H1 (cell line): ENCODE measurements at regions of chr9 and their contacts with region 1.

Region 1: DNA sequence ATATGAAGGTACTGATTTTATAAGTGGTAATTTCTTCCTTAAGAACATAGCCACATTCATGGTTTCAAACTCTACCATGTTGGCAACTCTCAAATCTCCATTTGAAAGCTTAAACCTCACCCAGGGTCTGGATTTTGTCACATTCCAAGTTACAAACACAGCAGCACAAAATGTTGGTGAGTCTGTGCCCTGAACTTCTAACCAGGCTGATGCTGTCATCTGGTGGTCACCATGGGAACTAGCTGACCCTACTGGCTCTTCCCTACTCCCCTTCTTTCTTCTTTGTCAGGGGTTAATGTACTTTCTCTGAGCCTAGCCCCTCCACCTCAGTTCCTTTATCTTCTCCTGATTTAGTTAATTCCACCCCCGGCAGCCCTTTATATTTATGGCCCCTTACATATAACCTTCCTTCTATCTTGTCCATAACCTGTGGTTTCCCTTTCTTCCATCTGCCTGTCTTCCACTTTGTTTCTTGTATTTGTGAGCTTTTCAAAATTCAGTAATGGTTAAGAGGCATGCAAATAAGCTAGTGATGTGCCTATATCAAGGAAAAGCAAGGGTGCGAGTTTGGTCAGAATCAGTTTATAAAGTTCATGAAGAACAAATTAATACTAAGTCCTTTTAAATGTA is 35.9 kb downstream of the TGFBR1 start:
- DNase-seq: peak in 1 of 2 experiments; percentile 21
- H3K4me3 ChIP-seq: no peak overlapping the region
- H3K27ac ChIP-seq: no peak overlapping the region
- H3K4me1 ChIP-seq: no peaks in the 10 kb centered on the region
- H3K27me3 ChIP-seq: no peaks in the 10 kb centered on the region
- CTCF ChIP-seq: peak; percentile 77 to 92 (median 86)
- EP300 ChIP-seq: no peak
- POLR2A ChIP-seq: no peak
- RAD21 ChIP-seq: peak; percentile 96

Region 2: GRCh38 chr9:98791147-98792095 is 349.4 kb before region 1 on chr9:
- CTCF ChIA-PET with region 1: interaction called, 13 read pairs
- POLR2A ChIA-PET with region 1: no interaction called
- DNase-seq: peak; percentile 80 to 93
- H3K4me3 ChIP-seq: no peak overlapping the region
- H3K27ac ChIP-seq: peak overlapping the region; percentile 14; the same call in 1 of the 2 replicates
- H3K4me1 ChIP-seq: peaks cover 5 to 18% (median 8%) of the 10 kb centered on the region in 4 experiments
- H3K27me3 ChIP-seq: no peaks in the 10 kb centered on the region
- CTCF ChIP-seq: peak; percentile 80 to 98 (median 96)
- EP300 ChIP-seq: no peak; a peak in 1 of 3 replicates
- POLR2A ChIP-seq: no peak
- RAD21 ChIP-seq: peak; percentile 34 to 53

Region 3: GRCh38 chr9:98860871-98861293 is 279.9 kb before region 1 on chr9:
- CTCF ChIA-PET with region 1: interaction called, 12 read pairs
- POLR2A ChIA-PET with region 1: no interaction called
- DNase-seq: no peak
- H3K4me3 ChIP-seq: no peak overlapping the region
- H3K27ac ChIP-seq: no peak overlapping the region
- H3K4me1 ChIP-seq: no peaks in the 10 kb centered on the region
- H3K27me3 ChIP-seq: no peaks in the 10 kb centered on the region
- CTCF ChIP-seq: peak in 2 of 3 experiments; percentile 20 to 37; a peak in 2 of 4 replicates
- EP300 ChIP-seq: no peak
- POLR2A ChIP-seq: no peak
- RAD21 ChIP-seq: peak; percentile 68 to 73

Region 4: GRCh38 chr9:98989036-98990000 is 151.5 kb before region 1 on chr9:
- CTCF ChIA-PET with region 1: interaction called, 22 read pairs
- POLR2A ChIA-PET with region 1: no interaction called
- DNase-seq: no peak
- H3K4me3 ChIP-seq: no peak overlapping the region
- H3K27ac ChIP-seq: no peak overlapping the region
- H3K4me1 ChIP-seq: no peaks in the 10 kb centered on the region
- H3K27me3 ChIP-seq: no peaks in the 10 kb centered on the region
- CTCF ChIP-seq: peak; percentile 18 to 48 (median 41); a peak in 2 of 4 replicates
- EP300 ChIP-seq: no peak
- POLR2A ChIP-seq: no peak
- RAD21 ChIP-seq: peak; percentile 27 to 53; a peak in 3 of 4 replicates

Region 5: GRCh38 chr9:99076483-99077171 is 64.2 kb before region 1 on chr9:
- CTCF ChIA-PET with region 1: no interaction called
- POLR2A ChIA-PET with region 1: no interaction called
- DNase-seq: no peak
- H3K4me3 ChIP-seq: no peak overlapping the region
- H3K27ac ChIP-seq: no peak overlapping the region
- H3K4me1 ChIP-seq: 0 out of 7 replicates have a peak, but pooled peaks cover 0 to 2% (median 0%) of the 10 kb centered on the region in 4 experiments
- H3K27me3 ChIP-seq: peaks cover 0 to 1% (median 0%) of the 10 kb centered on the region in 4 experiments; a peak in 1 of 7 replicates
- CTCF ChIP-seq: no peak
- EP300 ChIP-seq: no peak
- POLR2A ChIP-seq: no peak
- RAD21 ChIP-seq: no peak

Region 6: DNA sequence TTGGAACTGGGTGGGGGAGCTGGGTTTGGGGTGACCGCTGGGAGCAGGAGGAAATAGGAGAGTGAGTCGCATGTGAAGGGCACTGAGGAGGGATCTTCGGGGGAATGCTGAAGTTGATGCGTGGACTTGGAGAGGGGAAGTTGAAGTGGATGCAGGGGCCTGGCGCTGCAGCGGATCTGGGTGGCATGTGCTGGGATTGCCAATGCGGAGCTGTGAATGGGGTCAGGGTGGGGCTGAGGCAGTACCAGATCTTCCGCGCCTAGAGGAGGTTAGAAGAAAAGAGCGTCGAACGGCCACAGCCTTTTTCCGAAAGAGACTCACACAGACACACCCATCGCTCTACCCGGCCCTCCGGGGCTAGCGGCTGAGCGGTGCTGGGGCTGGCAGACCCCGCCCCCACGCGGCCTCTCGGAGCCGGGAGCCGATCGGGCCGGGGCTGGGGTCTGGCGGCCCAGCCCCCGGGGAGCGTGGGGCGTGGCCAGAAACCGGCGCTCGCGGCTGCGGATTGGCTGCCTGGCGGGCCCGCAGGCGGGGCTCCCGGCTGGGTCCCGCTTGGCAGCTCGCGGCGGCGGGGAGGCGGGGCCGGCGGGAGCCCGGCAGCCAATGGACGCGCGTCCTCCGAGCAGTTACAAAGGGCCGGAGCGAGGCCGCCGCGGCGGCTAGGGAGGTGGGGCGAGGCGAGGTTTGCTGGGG is 36.2 kb before region 1 on chr9 and contains the start of gene TGFBR1:
- CTCF ChIA-PET with region 1: interaction called, 16 read pairs
- POLR2A ChIA-PET with region 1: interaction called, 3 read pairs
- DNase-seq: peak; percentile 80 to 95
- H3K4me3 ChIP-seq: peak within 1 kb of the TSS; percentile 69 to 92 (median 82)
- H3K27ac ChIP-seq: peak within 1 kb of the TSS; percentile 51; the same call in 1 of the 2 replicates
- H3K4me1 ChIP-seq: peaks cover 0 to 3% (median 2%) of the 10 kb centered on the region in 4 experiments; a peak in 3 of 7 replicates
- H3K27me3 ChIP-seq: no peaks in the 10 kb centered on the region; a peak in 1 of 7 replicates
- CTCF ChIP-seq: peak in 1 of 3 experiments; percentile 3; a peak in 1 of 4 replicates
- EP300 ChIP-seq: no peak
- POLR2A ChIP-seq: peak; percentile 90 to 94; a peak in 2 of 3 replicates
- RAD21 ChIP-seq: peak in 1 of 2 experiments; percentile 9; a peak in 1 of 4 replicates
- total RNA-seq, gene TGFBR1: 51.7 and 52.4 TPM in 2 replicates